Ovary (tissue), 10 donors: ENCODE measurements at regions of chr3 and their contacts with region 1.

Region 1: DNA sequence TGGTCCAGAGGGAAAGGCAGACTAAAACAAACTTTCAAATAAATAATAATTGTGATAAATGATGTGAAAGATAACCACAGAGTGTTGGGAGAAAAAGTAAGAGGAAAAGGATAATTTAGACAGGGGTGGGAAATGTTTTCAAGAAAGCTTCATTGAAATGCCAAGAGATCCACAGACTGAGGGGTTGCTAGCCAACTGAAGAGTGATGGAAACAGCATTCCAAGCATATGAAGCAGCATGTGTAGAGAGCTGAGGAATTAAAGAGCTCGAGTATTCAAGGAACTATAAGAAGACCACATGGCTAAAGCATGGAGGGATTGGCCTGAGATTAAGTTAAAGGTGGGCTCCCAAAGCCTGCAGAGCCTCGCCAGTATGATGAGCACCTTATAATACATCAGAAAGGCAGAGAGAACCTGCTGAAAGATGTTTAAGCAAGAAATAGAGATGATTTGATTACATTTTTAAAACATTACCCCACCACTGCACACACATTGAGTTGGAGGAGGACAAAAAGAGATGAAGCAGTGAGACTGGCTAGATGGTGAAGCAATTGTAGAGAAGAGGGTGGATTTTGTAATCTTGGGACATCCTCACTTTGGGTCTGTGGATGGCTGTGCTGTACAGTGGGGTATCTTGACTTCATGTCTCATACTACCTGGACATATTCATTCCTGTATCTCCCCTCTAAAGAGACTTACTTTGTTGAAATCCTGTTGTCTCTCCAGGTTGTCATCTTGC is 100.8 kb downstream of the STAC start:
- DNase-seq: no peak
- H3K4me3 ChIP-seq: no peak overlapping the region
- H3K27ac ChIP-seq: no peak overlapping the region
- H3K4me1 ChIP-seq: no peaks in the 10 kb centered on the region
- H3K27me3 ChIP-seq: no peaks in the 10 kb centered on the region
- CTCF ChIP-seq: no peak
- EP300 ChIP-seq: no peak
- POLR2A ChIP-seq: no peak

Region 2: GRCh38 chr3:36227980-36228379 is 253.1 kb before region 1 on chr3:
- intact Hi-C with region 1: loop called in 1 of 4 experiments (anchors 10 kb)
- DNase-seq: no peak
- H3K4me3 ChIP-seq: no peak overlapping the region
- H3K27ac ChIP-seq: no peak overlapping the region
- H3K4me1 ChIP-seq: no peaks in the 10 kb centered on the region
- H3K27me3 ChIP-seq: no peaks in the 10 kb centered on the region
- CTCF ChIP-seq: no peak
- EP300 ChIP-seq: no peak
- POLR2A ChIP-seq: no peak

Region 3: GRCh38 chr3:36514171-36514570 is 33.1 kb after region 1 on chr3:
- intact Hi-C with region 1: no loop called
- DNase-seq: no peak
- H3K4me3 ChIP-seq: no peak overlapping the region
- H3K27ac ChIP-seq: no peak overlapping the region
- H3K4me1 ChIP-seq: no peaks in the 10 kb centered on the region
- H3K27me3 ChIP-seq: no peaks in the 10 kb centered on the region
- CTCF ChIP-seq: no peak
- EP300 ChIP-seq: no peak
- POLR2A ChIP-seq: no peak

Region 4: DNA sequence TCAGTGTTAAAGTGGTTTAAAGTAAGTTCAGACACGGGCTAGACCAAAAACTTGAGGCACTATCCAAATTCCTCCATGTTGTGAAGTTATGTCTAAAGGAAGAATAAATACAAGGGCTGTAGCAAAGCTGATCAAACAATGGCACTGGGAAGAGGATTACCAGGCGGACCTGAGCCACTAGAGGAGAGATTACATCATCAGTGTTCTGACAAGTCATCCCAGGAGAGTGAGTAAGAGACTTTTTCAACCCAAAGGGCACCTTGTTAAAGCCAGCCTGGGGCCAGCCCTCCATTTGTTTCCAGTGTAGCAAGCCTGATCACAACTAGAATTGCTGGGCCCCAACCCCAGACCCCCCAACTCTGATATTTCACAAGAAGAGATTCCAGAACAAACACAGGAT is 116.3 kb after region 1 on chr3:
- intact Hi-C with region 1: no loop called
- DNase-seq: no peak
- H3K4me3 ChIP-seq: no peak overlapping the region
- H3K27ac ChIP-seq: no peak overlapping the region
- H3K4me1 ChIP-seq: no peaks in the 10 kb centered on the region
- H3K27me3 ChIP-seq: no peaks in the 10 kb centered on the region
- CTCF ChIP-seq: no peak
- EP300 ChIP-seq: no peak
- POLR2A ChIP-seq: no peak